Breast epithelium (tissue), 4 donors: ENCODE measurements at regions of chr19 and their contacts with region 1.

Region 1: DNA sequence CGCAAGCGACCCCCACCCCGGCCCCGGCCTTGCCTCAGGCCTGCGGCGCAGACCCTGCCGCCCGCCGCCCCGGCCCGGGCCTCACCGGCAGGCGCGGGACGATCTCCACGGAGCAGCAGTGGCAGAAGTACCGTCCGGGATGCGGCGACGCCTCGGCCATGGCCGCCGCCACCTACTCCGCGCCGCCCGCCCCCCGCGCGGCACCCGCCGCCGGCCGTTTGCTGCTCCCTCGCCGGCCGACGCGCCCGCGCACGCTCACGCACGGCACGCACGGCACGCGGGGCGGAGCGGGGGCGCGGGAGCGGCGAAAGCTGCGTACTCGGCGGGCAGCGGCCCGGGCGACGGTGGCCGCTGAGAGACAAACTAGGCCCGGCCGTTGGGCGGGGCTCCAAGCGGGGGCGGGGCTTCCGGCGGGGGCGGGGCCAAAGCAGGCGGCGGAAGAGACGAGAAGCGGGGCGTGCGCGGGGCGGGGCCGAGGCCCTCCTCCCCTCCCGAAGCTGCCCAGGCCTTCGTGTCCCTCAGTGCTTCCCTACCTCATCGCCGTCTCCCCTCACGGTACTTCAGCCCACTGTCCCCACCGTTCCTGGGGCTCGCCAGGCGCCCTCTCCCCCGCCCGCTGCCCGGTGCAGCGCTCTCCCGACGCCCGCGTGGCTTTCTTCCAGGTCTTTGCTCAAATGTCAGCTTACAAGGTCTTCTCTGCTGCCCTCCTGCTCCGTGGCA is at the start of gene RNF126:
- DNase-seq: peak; percentile 91 to 97
- H3K4me3 ChIP-seq: peak within 1 kb of the TSS; percentile 81 to 90 (median 83)
- H3K27ac ChIP-seq: peak within 1 kb of the TSS; percentile 89 to 97
- H3K4me1 ChIP-seq: peaks cover 18 to 30% of the 10 kb centered on the region in 2 donors
- H3K27me3 ChIP-seq: no peaks in the 10 kb centered on the region
- CTCF ChIP-seq: no peak
- POLR2A ChIP-seq: no peak
- total RNA-seq, gene RNF126: 41.1 to 46.5 (median 46.2) TPM

Region 2: GRCh38 chr19:728011-728410 is 64.9 kb after region 1 on chr19:
- intact Hi-C with region 1: loop called (anchors 5 kb)
- DNase-seq: no peak
- H3K4me3 ChIP-seq: no peak overlapping the region
- H3K27ac ChIP-seq: peak overlapping the region; percentile 29 to 91
- H3K4me1 ChIP-seq: no peaks in the 10 kb centered on the region
- H3K27me3 ChIP-seq: no peaks in the 10 kb centered on the region
- CTCF ChIP-seq: no peak
- POLR2A ChIP-seq: no peak